Activated T-helper 1 cell treated with anti-CD3 and anti-CD28 coated beads, Interleukin-12 subunit alpha, Interleukin-12 subunit beta, Interleukin-2, Interleukin-4 antibody, amounts not matched to agents 30 ng/mL and 10 ng/mL and 1 ng/mL, durations not matched to agents 14 hours and 24 hours and 36 hours (primary cell): ENCODE measurements at regions of chr20 and their contacts with region 1.

Region 1: DNA sequence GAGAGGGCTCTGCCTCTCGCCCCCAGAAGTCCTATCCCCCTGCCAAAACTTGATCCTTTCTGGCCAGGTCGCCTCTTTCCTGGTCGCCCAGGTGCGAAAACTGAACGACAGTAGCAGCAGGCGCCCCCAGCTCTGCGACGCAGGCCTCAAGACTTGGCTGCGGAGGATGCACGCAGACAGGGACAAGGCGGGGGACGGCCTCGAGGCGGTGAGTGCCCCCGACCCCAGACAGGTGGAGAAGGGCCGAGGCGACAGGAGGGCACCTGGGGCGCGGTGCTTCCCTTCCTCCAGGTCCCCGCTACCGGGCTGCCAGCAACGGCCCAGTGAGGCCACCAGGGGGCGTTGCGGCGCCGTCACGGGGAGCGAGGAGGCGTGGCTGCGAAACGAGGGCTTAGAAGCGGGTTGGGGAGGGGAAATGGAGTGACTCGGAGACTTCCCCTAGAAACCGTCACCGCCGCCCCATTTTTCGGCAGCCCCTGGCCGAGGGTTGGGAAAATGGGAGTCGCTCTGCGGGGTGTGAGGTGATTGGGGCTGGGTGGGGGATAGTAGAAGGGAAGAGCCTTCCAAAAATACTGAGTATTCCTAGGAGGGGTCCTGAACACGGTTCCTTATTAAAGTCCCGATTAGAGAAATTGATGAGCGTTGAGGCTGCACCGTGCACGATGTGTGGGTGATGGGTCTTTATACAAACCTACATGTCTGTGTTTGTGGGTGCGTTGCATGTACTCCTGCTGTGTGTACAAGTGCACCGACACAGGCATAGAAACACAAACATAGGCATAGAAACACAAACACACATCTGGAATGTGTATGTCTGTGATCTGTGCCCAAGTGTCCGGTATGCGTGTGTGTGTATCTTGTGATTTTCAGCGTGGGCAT is 44.6 kb downstream of the ARHGAP40 start:
- DNase-seq: peak; percentile 87
- H3K4me3 Mint-ChIP-seq: peak overlapping the region; percentile 82
- H3K27ac Mint-ChIP-seq: no peak overlapping the region
- H3K4me1 Mint-ChIP-seq: peaks cover 9% of the 10 kb centered on the region
- H3K27me3 Mint-ChIP-seq: peaks cover 34% of the 10 kb centered on the region

Region 2: GRCh38 chr20:38730989-38731737 is 84.9 kb after region 1 on chr20:
- intact Hi-C with region 1: loop called (anchors 1 kb)
- DNase-seq: peak; percentile 57
- H3K4me3 Mint-ChIP-seq: peak overlapping the region; percentile 61
- H3K27ac Mint-ChIP-seq: peak overlapping the region; percentile 76
- H3K4me1 Mint-ChIP-seq: peaks cover 48% of the 10 kb centered on the region
- H3K27me3 Mint-ChIP-seq: peaks cover 85% of the 10 kb centered on the region

Region 3: GRCh38 chr20:38926142-38926933 is 280.1 kb after region 1 on chr20 and contains the start of gene FAM83D:
- intact Hi-C with region 1: loop called (anchors 1 kb)
- DNase-seq: peak; percentile 97
- H3K4me3 Mint-ChIP-seq: peak within 1 kb of the TSS; percentile 86
- H3K27ac Mint-ChIP-seq: peak within 1 kb of the TSS; percentile 81
- H3K4me1 Mint-ChIP-seq: peaks cover 39% of the 10 kb centered on the region
- H3K27me3 Mint-ChIP-seq: no peaks in the 10 kb centered on the region
- total RNA-seq, gene FAM83D: 11.0 and 12.4 TPM in 2 replicates

Region 4: GRCh38 chr20:38962044-38962927 is 316.1 kb after region 1 on chr20 and contains the start of gene DHX35:
- intact Hi-C with region 1: loop called (anchors 1 kb)
- DNase-seq: peak; percentile 99
- H3K4me3 Mint-ChIP-seq: peak within 1 kb of the TSS; percentile 98
- H3K27ac Mint-ChIP-seq: peak within 1 kb of the TSS; percentile 94
- H3K4me1 Mint-ChIP-seq: peaks cover 35% of the 10 kb centered on the region
- H3K27me3 Mint-ChIP-seq: no peaks in the 10 kb centered on the region
- total RNA-seq, gene DHX35: 17.2 and 17.3 TPM in 2 replicates

Region 5: GRCh38 chr20:39057911-39058310 is 411.7 kb after region 1 on chr20:
- intact Hi-C with region 1: no loop called
- DNase-seq: no peak
- H3K4me3 Mint-ChIP-seq: no peak overlapping the region
- H3K27ac Mint-ChIP-seq: no peak overlapping the region
- H3K4me1 Mint-ChIP-seq: no peaks in the 10 kb centered on the region
- H3K27me3 Mint-ChIP-seq: peaks cover 7% of the 10 kb centered on the region

Region 6: DNA sequence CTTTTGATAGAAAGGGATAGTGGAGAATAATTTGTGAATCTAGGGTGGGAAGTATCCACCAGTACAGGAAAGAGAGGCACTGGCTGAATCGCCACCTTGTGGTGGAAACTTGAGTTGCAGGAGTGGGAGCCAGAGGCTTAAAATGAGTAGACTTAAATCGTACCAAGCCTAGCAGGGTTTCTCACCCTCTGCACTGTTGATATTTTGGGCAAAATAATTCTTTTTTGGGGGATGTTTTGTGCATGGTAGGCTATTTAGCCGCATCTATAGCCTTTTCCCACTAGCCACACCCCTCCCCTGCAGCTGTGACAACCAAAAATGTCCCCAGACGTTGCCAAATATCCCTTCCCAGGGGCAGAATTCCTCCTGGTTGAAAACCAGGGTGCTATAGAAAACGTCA is 435.0 kb after region 1 on chr20:
- intact Hi-C with region 1: loop called (anchors 1 kb)
- DNase-seq: peak; percentile 64
- H3K4me3 Mint-ChIP-seq: no peak overlapping the region
- H3K27ac Mint-ChIP-seq: no peak overlapping the region
- H3K4me1 Mint-ChIP-seq: peaks cover 7% of the 10 kb centered on the region
- H3K27me3 Mint-ChIP-seq: peaks cover 16% of the 10 kb centered on the region